ENCODE measurements at regions of chr15 and their contacts with region 1.

Region 1: DNA sequence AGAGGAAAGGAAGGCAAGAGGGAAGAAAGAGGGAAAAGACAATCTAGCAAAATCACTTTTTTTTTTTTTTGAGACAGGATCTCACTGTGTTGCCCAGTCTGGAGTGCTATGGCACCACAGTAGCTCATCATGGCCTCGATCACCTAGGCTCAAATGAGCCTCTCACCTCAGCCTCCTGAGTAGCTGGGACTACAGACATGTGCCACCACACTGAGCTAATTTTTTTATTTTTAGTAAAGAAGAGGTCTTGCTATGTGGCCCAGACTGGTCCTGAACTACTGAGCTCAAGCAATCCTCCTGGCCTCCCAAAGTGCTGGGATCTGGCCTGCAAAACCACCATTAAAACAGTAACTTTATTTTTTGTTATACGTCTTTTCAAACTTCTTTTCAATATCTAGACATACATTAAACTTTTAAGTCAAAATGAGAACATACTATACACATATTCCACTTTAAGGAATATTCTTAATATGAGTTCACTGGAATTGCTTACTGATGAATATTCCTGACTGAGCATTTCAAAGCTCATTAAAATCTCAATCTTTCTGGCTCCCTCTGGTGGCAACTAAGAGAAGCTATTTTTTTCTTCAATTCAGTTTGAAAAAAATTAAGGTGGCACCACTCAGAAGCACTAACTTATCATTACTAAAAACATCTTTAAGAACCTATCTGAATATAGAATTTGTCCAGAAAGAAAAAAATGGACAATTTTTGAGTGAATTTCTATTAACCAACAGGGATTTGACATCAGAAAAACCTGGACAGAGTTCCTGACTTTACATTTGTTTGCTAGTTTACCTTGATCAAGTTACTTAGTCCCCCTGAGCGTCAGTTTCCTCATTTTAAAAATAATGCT is 40.9 kb downstream of the UACA start:
- DNase-seq: peak; percentile 61
- ATAC-seq: 0 out of 2 replicates have a peak, but pooled peaks have one; percentile 11
- H3K4me3 ChIP-seq: no peak overlapping the region
- H3K27ac ChIP-seq: no peak overlapping the region
- H3K4me1 ChIP-seq: peaks cover 2% of the 10 kb centered on the region
- H3K27me3 ChIP-seq: no peaks in the 10 kb centered on the region
- CTCF ChIP-seq: peak; percentile 77

Region 2: DNA sequence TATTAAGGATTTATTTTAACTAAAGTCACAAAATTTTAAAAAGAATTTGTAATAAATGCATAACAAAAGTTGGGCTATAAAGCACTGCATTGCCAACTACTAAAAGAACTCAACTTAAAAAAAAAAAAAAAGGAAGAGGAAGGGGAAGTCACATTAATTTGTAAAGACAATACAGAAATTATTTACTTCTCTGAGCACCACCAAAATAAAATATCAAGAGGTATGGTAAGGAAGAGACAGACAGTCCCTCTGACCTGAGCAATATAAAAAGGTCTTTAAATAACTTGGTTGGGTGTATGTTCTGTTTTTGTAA is 42.6 kb before region 1 on chr15:
- CTCF ChIA-PET with region 1: interaction called, 6 read pairs
- POLR2A ChIA-PET with region 1: interaction called, 3 read pairs
- intact Hi-C with region 1: loop called (anchors 1 kb)
- DNase-seq: no peak
- ATAC-seq: no peak
- H3K4me3 ChIP-seq: no peak overlapping the region
- H3K27ac ChIP-seq: no peak overlapping the region
- H3K4me1 ChIP-seq: no peaks in the 10 kb centered on the region
- H3K27me3 ChIP-seq: no peaks in the 10 kb centered on the region
- CTCF ChIP-seq: no peak

Region 3: GRCh38 chr15:70741107-70741531 is 18.6 kb after region 1 on chr15:
- CTCF ChIA-PET with region 1: no interaction called
- POLR2A ChIA-PET with region 1: no interaction called
- intact Hi-C with region 1: no loop called
- DNase-seq: peak; percentile 65
- ATAC-seq: peak; percentile 78
- H3K4me3 ChIP-seq: no peak overlapping the region
- H3K27ac ChIP-seq: peak overlapping the region; percentile 69
- H3K4me1 ChIP-seq: peaks cover 26% of the 10 kb centered on the region
- H3K27me3 ChIP-seq: no peaks in the 10 kb centered on the region
- CTCF ChIP-seq: no peak

Region 4: GRCh38 chr15:71337207-71337700 is 614.8 kb after region 1 on chr15:
- CTCF ChIA-PET with region 1: no interaction called
- POLR2A ChIA-PET with region 1: no interaction called
- intact Hi-C with region 1: no loop called
- DNase-seq: peak; percentile 94
- ATAC-seq: peak; percentile 81
- H3K4me3 ChIP-seq: 0 out of 2 replicates have a peak overlapping the region, but pooled peaks have one; percentile 10
- H3K27ac ChIP-seq: peak overlapping the region; percentile 91
- H3K4me1 ChIP-seq: peaks cover 36% of the 10 kb centered on the region
- H3K27me3 ChIP-seq: no peaks in the 10 kb centered on the region
- CTCF ChIP-seq: no peak